Panc1 (cell line): ENCODE measurements at regions of chr6 and their contacts with region 1.

Region 1: DNA sequence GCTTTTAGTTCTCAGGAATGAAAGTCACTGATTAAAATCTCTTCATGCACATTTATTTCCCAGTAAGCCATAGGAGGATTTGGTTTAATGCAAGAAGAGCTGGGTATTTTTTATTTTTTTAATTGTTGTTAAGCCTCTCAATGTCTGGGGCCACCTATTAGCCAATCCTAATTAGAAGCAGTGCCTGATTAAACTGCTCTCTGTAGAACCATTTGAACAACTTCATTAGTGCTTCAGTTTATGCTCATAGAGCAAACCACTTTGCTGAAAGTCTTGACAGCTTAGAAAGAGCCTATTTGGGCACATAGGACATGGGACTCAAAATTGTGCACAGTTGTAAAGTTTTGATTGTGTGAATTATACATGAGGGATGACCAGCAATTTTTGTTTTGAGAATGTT is 548.9 kb downstream of the FRK start:
- DNase-seq: no peak
- ATAC-seq: no peak
- H3K4me3 ChIP-seq: no peak overlapping the region
- H3K27ac ChIP-seq: no peak overlapping the region
- H3K4me1 ChIP-seq: no peaks in the 10 kb centered on the region
- H3K27me3 ChIP-seq: no peaks in the 10 kb centered on the region
- CTCF ChIP-seq: no peak

Region 2: DNA sequence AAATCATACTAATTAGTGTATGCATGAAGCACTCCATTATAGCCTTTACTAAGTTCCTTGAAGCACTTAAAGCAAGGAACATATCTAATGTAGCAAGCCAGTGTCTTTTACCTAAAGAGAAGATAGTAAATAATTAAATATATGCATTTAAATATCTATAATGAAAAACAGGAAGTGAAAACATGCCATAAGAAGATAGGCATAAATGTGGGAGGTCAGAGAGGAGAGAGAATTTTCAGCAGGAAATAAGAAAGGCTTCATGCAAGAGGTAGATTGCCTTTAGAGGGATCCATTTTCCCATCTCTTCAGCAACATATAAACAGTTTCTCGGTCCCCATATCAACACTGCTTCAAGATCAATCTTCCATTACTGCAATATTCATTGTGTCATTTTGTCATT is 50.9 kb before region 1 on chr6:
- CTCF ChIA-PET with region 1: no interaction called
- POLR2A ChIA-PET with region 1: no interaction called
- in situ Hi-C with region 1: no loop called
- intact Hi-C with region 1: no loop called
- DNase-seq: no peak
- ATAC-seq: no peak
- H3K4me3 ChIP-seq: no peak overlapping the region
- H3K27ac ChIP-seq: no peak overlapping the region
- H3K4me1 ChIP-seq: no peaks in the 10 kb centered on the region
- H3K27me3 ChIP-seq: no peaks in the 10 kb centered on the region
- CTCF ChIP-seq: no peak

Region 3: GRCh38 chr6:115524821-115525220 is 13.1 kb after region 1 on chr6:
- CTCF ChIA-PET with region 1: no interaction called
- POLR2A ChIA-PET with region 1: interaction called, 10 read pairs
- in situ Hi-C with region 1: no loop called
- intact Hi-C with region 1: no loop called
- DNase-seq: no peak
- ATAC-seq: no peak
- H3K4me3 ChIP-seq: no peak overlapping the region
- H3K27ac ChIP-seq: no peak overlapping the region
- H3K4me1 ChIP-seq: no peaks in the 10 kb centered on the region
- H3K27me3 ChIP-seq: no peaks in the 10 kb centered on the region
- CTCF ChIP-seq: no peak

Region 4: GRCh38 chr6:115544765-115545673 is 33.2 kb after region 1 on chr6:
- CTCF ChIA-PET with region 1: no interaction called
- POLR2A ChIA-PET with region 1: no interaction called
- in situ Hi-C with region 1: no loop called
- intact Hi-C with region 1: no loop called
- DNase-seq: no peak
- ATAC-seq: peak; percentile 62; the same call in 1 of the 2 replicates
- H3K4me3 ChIP-seq: no peak overlapping the region
- H3K27ac ChIP-seq: no peak overlapping the region
- H3K4me1 ChIP-seq: no peaks in the 10 kb centered on the region
- H3K27me3 ChIP-seq: no peaks in the 10 kb centered on the region
- CTCF ChIP-seq: peak; percentile 38